Heart left ventricle (tissue), 16 donors: ENCODE measurements at regions of chr13 and their contacts with region 1.

Region 1: GRCh38 chr13:68490594-68490993 is 1260.5 kb upstream of the PCDH9 start:
- DNase-seq: no peak
- ATAC-seq: no peak
- H3K4me3 ChIP-seq: no peak overlapping the region
- H3K27ac ChIP-seq: no peak overlapping the region
- H3K4me1 ChIP-seq: no peaks in the 10 kb centered on the region
- H3K27me3 ChIP-seq: no peaks in the 10 kb centered on the region
- CTCF ChIP-seq: no peak
- POLR2A ChIP-seq: no peak

Region 2: GRCh38 chr13:68439821-68440220 is 50.8 kb before region 1 on chr13:
- intact Hi-C with region 1: loop called in 1 of 10 experiments (anchors 10 kb)
- DNase-seq: no peak
- ATAC-seq: no peak
- H3K4me3 ChIP-seq: no peak overlapping the region
- H3K27ac ChIP-seq: no peak overlapping the region
- H3K4me1 ChIP-seq: no peaks in the 10 kb centered on the region
- H3K27me3 ChIP-seq: no peaks in the 10 kb centered on the region
- CTCF ChIP-seq: no peak
- POLR2A ChIP-seq: no peak

Region 3: GRCh38 chr13:68523838-68524424 is 33.3 kb after region 1 on chr13:
- intact Hi-C with region 1: no loop called
- DNase-seq: peak in 1 of 5 donors; percentile 56
- ATAC-seq: no peak
- H3K4me3 ChIP-seq: no peak overlapping the region
- H3K27ac ChIP-seq: no peak overlapping the region
- H3K4me1 ChIP-seq: no peaks in the 10 kb centered on the region
- H3K27me3 ChIP-seq: no peaks in the 10 kb centered on the region
- CTCF ChIP-seq: no peak
- POLR2A ChIP-seq: no peak

Region 4: DNA sequence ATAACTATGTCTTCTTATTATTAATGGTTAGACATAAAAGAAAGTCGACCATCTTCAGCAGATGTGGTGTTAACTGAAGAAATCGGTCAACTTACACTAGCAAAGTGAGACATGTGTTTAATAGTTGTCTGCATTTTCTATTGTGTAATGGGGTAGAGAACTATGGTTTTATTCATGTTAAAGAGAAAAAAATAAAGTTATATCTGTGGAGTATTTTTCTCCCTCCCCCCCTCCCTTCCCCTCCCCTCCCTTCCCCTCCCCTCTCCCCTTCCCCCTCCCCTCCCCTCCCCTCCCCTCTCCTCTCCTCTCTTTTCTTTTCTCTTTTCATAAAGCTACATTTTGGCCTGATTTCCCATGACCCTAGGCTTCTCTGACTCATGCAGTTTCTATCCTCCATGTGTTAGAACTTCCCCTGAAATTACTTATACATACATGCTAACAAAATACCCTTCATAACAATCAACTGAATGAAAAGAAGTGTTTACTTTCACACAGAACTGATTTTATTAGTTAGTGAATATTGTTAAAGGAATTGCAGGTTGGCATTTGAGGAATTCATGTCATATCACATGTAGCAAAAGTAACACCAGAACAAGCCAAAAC is 186.0 kb after region 1 on chr13:
- intact Hi-C with region 1: no loop called
- DNase-seq: no peak
- ATAC-seq: no peak
- H3K4me3 ChIP-seq: no peak overlapping the region
- H3K27ac ChIP-seq: no peak overlapping the region
- H3K4me1 ChIP-seq: no peaks in the 10 kb centered on the region
- H3K27me3 ChIP-seq: no peaks in the 10 kb centered on the region
- CTCF ChIP-seq: no peak
- POLR2A ChIP-seq: no peak

Region 5: GRCh38 chr13:68690567-68690966 is 200.0 kb after region 1 on chr13:
- intact Hi-C with region 1: no loop called
- DNase-seq: no peak
- ATAC-seq: no peak
- H3K4me3 ChIP-seq: no peak overlapping the region
- H3K27ac ChIP-seq: no peak overlapping the region
- H3K4me1 ChIP-seq: no peaks in the 10 kb centered on the region
- H3K27me3 ChIP-seq: no peaks in the 10 kb centered on the region
- CTCF ChIP-seq: no peak
- POLR2A ChIP-seq: no peak

Region 6: GRCh38 chr13:68897331-68897928 is 406.8 kb after region 1 on chr13:
- intact Hi-C with region 1: no loop called
- DNase-seq: no peak
- ATAC-seq: no peak
- H3K4me3 ChIP-seq: no peak overlapping the region
- H3K27ac ChIP-seq: no peak overlapping the region
- H3K4me1 ChIP-seq: no peaks in the 10 kb centered on the region
- H3K27me3 ChIP-seq: no peaks in the 10 kb centered on the region
- CTCF ChIP-seq: no peak
- POLR2A ChIP-seq: no peak